ENCODE measurements at regions of chr6 and their contacts with region 1.

Region 1: DNA sequence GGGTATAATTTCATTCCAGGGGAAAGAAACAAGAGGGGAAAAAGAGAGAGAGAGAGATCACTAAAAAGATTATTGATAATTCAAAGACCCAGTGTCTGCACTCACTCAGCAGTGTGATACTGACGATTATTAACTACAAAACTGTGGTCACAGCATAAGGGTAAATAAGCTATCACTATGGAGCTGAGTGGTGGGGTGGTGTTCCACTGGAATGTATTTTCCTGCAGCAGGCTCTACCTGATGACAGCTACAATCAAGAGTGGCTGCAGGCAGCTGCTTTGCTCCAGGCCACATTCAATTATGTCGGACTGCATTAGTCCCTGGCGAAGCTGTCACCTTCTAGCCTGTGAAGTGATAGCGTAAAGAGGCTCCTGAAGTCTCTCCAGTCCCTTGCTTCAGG is 122.2 kb upstream of the TFAP2D start:
- DNase-seq: no peak
- ATAC-seq: no peak
- H3K4me3 ChIP-seq: no peak overlapping the region
- H3K27ac ChIP-seq: no peak overlapping the region
- H3K4me1 ChIP-seq: no peaks in the 10 kb centered on the region
- H3K27me3 ChIP-seq: no peaks in the 10 kb centered on the region
- CTCF ChIP-seq: no peak
- POLR2A ChIP-seq: no peak
- RAD21 ChIP-seq: no peak

Region 2: DNA sequence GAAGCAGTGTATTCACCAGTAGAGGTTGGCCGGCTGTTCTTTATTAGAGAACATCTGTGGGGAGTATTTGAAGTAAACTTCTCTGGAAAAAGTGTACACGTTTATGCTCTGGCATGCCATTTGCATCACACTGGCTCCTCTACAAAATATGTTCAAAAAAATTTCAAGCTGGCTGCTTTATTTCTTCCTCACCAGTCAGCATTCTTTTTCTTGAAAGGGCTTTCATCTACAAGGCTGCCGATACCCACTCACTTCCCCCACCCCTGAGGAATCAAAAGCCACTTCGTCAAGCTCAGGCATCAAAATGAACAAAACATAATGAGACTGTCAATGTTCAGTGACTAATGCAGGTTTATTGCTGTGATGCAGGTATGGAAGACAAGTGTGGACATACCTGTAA is 521.6 kb after region 1 on chr6:
- CTCF ChIA-PET with region 1: no interaction called
- POLR2A ChIA-PET with region 1: no interaction called
- dilution Hi-C with region 1: no loop called
- in situ Hi-C with region 1: no loop called
- intact Hi-C with region 1: loop called (anchors 5 kb)
- DNase-seq: no peak
- ATAC-seq: no peak
- H3K4me3 ChIP-seq: no peak overlapping the region
- H3K27ac ChIP-seq: no peak overlapping the region
- H3K4me1 ChIP-seq: no peaks in the 10 kb centered on the region
- H3K27me3 ChIP-seq: no peaks in the 10 kb centered on the region
- CTCF ChIP-seq: no peak
- POLR2A ChIP-seq: no peak
- RAD21 ChIP-seq: no peak